Panc1 (cell line): ENCODE measurements at regions of chr1 and their contacts with region 1.

Region 1: GRCh38 chr1:22313331-22313730 is 138.3 kb upstream of the ZBTB40 start:
- DNase-seq: no peak
- ATAC-seq: no peak
- H3K4me3 ChIP-seq: no peak overlapping the region
- H3K27ac ChIP-seq: no peak overlapping the region
- H3K4me1 ChIP-seq: no peaks in the 10 kb centered on the region
- H3K27me3 ChIP-seq: peaks cover 5% of the 10 kb centered on the region
- CTCF ChIP-seq: no peak

Region 2: DNA sequence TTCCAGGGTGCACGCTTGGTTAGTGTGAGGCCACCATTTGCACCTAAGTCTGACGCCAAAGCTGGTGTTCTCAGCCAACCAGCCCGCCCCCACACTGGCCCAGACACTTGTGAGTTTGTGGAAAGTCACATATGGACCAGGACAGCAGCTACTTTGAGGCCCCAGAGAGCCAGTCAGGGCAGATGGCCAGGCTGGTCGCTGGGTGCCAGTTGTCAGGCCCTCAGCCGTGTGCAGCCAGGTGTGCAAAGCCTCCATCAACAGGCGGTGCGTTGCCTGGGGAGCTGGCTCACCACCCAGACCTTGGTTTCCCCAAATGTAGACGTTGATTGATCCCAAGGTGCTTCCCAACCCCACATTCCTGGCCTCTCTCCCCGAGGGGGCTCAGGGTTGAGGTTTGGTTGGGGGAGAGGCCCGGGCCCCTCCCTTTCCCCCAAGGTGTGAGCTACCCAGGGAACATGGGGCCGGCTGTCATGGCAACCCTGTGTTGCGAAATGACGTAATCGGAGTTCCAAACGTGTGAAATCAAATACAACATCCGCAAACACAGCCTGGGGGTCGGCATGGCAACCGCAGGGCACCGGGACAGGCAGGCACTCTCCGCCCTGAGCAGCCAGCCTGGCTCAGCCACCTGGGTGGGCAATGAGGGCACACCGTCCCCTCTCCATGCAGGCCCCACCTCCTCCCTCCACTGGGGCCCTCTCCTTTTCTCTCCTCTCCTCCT is 128.3 kb before region 1 on chr1:
- CTCF ChIA-PET with region 1: no interaction called
- POLR2A ChIA-PET with region 1: no interaction called
- in situ Hi-C with region 1: no loop called
- intact Hi-C with region 1: no loop called
- DNase-seq: no peak
- ATAC-seq: no peak
- H3K4me3 ChIP-seq: no peak overlapping the region
- H3K27ac ChIP-seq: no peak overlapping the region
- H3K4me1 ChIP-seq: no peaks in the 10 kb centered on the region
- H3K27me3 ChIP-seq: no peaks in the 10 kb centered on the region
- CTCF ChIP-seq: no peak

Region 3: DNA sequence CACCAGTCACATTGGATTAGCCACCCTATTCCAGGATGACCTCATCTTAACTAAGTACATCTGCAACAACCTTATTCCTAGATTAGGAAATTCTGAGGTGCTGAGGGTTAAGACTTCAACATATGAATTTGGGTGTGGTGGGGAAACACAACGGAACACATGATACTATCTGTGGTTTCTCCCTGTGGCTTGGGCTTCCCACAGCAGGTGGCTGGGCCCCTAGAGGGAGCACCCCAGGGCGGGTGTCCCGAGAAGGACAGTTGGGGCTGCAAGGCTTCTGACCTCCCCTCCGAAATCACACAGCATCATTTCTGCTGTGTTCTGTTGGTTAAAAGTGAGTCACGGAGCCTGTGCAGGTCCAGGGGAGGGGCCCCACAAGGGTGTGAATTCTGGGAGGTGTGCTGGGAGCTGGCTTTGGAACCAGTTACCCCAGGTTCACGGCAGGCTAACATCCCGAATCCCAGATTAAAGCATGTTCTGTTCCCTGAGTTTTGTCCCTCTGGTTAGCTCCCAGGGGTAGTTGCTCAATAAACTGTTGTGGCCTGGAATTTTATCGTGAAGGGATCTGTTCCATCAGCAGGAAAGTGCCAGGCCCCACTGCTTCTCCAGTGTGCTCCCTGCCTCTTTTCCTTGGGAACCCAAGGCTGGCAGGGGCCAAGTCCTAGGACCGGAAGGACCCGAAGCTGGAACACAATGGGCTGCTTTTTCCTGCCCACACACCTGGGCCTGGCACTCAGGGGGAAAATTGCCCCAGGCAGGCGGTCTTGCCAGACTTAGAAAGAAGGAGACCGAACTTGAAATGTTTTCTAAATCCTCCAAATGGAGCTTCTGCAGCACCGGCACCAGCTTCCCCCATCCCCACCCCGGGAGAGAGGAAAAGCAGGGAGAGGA is 16.4 kb before region 1 on chr1:
- CTCF ChIA-PET with region 1: no interaction called
- POLR2A ChIA-PET with region 1: no interaction called
- in situ Hi-C with region 1: no loop called
- intact Hi-C with region 1: loop called (anchors 2 kb)
- DNase-seq: no peak
- ATAC-seq: no peak
- H3K4me3 ChIP-seq: no peak overlapping the region
- H3K27ac ChIP-seq: no peak overlapping the region
- H3K4me1 ChIP-seq: no peaks in the 10 kb centered on the region
- H3K27me3 ChIP-seq: peaks cover 5% of the 10 kb centered on the region
- CTCF ChIP-seq: no peak